Naive thymus-derived CD8-positive, alpha-beta T cell (primary cell): ENCODE measurements at regions of chr16 and their contacts with region 1.

Region 1: DNA sequence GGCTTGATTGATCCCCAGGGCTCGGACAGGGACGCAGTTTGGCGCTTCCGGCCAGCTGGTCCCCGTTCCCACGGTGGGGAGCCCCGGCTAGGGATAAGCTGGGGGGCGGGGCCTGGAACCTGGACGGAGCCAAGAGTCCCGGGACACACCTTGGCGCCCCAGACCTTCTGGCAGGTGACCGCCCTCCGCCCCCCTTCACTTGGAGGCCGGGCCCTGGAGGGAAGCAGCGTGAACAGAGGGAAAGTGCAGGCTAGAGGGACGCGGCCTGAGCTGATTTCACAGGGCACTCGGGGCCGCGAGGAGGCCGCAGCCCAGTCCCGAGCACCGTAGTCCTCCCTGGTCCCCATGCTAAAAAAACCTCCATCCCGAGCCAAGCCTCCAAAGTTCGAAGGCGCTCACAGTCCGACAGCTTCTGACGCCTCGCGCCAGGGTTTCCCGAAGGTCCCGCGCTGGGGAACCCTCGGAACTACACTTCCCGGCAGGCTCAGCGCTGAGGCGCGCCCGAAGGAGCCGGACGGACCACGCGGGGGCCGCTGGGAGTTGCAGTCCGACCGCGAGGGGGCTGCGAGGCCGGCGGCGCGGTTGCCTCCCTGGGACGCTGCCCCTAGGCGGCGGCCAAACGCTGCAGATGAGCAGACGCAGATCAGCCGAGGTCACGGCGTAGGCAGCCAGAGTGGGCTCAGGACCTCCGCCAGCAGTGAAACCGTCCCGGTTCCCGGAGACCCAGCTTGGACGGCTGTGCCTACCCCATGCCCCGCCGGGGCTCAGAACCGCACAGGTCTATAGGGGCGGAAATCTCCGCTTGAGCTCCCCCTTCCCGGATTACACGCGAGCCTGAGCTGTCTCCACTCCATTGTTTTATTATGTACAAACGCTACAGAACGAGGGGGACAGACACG is at the start of gene TBX6:
- DNase-seq: peak; percentile 86 to 93 (median 92)
- ATAC-seq: peak; percentile 77 to 81
- H3K4me3 Mint-ChIP-seq: peak within 1 kb of the TSS; percentile 80 to 93 (median 91)
- H3K27ac Mint-ChIP-seq: peak within 1 kb of the TSS; percentile 88 to 98 (median 94)
- H3K4me1 Mint-ChIP-seq: peaks cover 30 to 63% (median 57%) of the 10 kb centered on the region in 4 donors
- H3K27me3 Mint-ChIP-seq: no peaks in the 10 kb centered on the region
- polyA plus RNA-seq, gene TBX6: 0.15 to 0.25 (median 0.25) TPM

Region 2: DNA sequence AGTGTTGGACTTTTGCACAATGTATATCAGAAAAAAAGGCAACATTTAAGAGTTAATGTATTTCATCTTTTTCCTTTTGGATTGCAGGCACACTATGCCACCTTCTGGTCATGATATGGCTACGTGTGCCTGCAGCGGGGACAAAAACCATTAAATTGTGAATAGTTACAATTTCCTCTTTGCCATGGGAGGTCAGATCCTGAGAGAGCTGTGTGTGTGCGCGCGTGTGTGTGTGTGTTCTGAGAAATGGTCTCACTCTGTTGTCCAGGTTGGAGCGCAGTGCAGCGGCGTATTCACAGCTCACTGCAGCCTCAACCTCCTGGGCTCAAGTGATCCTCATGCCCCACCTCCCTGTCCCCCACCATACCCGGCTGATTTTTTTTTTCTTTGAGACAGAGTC is 1542.3 kb before region 1 on chr16:
- POLR2A ChIA-PET with region 1: no interaction called
- DNase-seq: peak in 5 of 10 donors; percentile 9 to 51 (median 19)
- ATAC-seq: no peak
- H3K4me3 Mint-ChIP-seq: peak overlapping the region in 1 of 10 donors; percentile 33
- H3K27ac Mint-ChIP-seq: peak overlapping the region in 6 of 10 donors; percentile 1 to 77 (median 38)
- H3K4me1 Mint-ChIP-seq: peaks cover 6 to 16% (median 9%) of the 10 kb centered on the region in 4 donors
- H3K27me3 Mint-ChIP-seq: no peaks in the 10 kb centered on the region

Region 3: DNA sequence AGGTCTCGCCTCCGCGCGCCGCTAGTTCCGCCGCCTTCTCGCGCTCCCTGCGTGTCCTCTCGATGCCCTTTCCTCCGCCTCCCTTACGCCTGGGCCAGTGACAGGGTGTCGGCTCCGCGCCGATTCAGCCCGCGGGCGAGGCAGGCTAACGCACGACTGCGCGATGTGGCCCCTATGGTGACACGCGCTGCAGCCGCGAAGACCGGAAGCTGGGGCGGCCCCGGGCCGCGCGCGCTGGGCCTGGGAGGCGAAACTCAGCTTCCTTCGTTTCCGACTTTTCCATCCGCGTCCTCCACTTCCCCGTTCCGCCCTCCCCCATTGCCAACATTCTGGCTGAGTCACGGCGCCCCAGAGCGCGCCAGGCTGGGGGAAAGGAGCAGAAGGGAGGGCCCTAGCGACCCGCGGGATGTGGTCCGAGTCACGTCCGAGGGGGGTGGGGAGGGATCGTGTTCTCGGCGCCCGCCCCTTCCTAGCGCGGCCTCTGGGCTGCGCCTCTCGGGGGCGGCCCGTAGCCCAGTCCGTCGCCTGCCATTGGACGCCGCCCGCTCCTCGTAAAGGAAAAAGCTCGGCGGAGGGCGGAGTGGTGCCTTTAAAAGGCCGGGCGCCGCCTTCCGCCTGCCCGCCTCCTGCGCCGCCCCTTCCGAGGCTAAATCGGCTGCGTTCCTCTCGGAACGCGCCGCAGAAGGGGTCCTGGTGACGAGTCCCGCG is 26.4 kb before region 1 on chr16 and contains the start of gene ALDOA:
- POLR2A ChIA-PET with region 1: interaction called, 192 read pairs
- DNase-seq: peak; percentile 89 to 96 (median 92)
- ATAC-seq: peak; percentile 81 to 87
- H3K4me3 Mint-ChIP-seq: peak within 1 kb of the TSS; percentile 98 to 100 (median 99)
- H3K27ac Mint-ChIP-seq: peak within 1 kb of the TSS; percentile 94 to 99 (median 97)
- H3K4me1 Mint-ChIP-seq: peaks cover 17 to 46% (median 43%) of the 10 kb centered on the region in 4 donors
- H3K27me3 Mint-ChIP-seq: no peaks in the 10 kb centered on the region
- polyA plus RNA-seq, gene ALDOA: 798 to 1,176 (median 994) TPM

Region 4: GRCh38 chr16:30112197-30113030 is 20.7 kb after region 1 on chr16:
- POLR2A ChIA-PET with region 1: interaction called, 20 read pairs
- DNase-seq: peak in 8 of 10 donors; percentile 15 to 73 (median 48)
- ATAC-seq: peak in 1 of 2 donors; percentile 57
- H3K4me3 Mint-ChIP-seq: no peak overlapping the region
- H3K27ac Mint-ChIP-seq: no peak overlapping the region
- H3K4me1 Mint-ChIP-seq: peaks cover 6 to 19% (median 12%) of the 10 kb centered on the region in 4 donors
- H3K27me3 Mint-ChIP-seq: no peaks in the 10 kb centered on the region

Region 5: GRCh38 chr16:30142672-30143346 is 51.1 kb after region 1 on chr16:
- POLR2A ChIA-PET with region 1: interaction called, 14 read pairs
- DNase-seq: peak in 5 of 10 donors; percentile 4 to 52 (median 40)
- ATAC-seq: peak; percentile 68 to 75
- H3K4me3 Mint-ChIP-seq: peak overlapping the region in 4 of 10 donors; percentile 2 to 72 (median 28)
- H3K27ac Mint-ChIP-seq: peak overlapping the region in 9 of 10 donors; percentile 19 to 82 (median 60)
- H3K4me1 Mint-ChIP-seq: peaks cover 13 to 33% (median 21%) of the 10 kb centered on the region in 4 donors
- H3K27me3 Mint-ChIP-seq: no peaks in the 10 kb centered on the region